ENCODE measurements at regions of chr2 and their contacts with region 1.

Region 1: DNA sequence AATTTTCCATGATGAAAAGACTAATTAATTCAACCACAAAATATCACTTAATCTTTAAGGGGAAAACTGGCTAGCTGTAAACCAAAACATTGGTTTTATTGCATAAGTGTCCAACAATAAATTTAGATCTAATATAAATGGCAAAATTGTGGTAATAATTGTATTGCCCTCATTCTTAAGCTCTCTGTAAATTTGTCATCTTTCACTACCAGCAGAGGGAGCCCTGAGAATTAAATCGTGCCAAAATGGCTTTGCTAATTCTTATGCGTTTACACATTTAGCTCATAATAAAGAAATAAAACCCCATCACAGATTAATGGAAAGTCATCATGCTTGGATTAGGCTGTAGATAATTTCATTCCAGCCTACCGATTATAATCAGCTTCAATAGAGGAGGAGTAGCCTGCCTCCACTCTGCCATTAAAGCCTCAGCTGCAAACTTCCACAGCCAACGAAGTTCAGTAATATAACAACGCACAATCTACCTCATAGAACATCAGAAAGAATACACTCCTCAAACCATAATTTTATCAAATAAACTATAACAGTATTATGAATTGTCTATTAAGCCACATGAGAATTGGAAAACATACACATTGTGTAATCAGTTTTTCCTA is 70.0 kb upstream of the ATP5MC3 start:
- DNase-seq: no peak
- H3K4me3 ChIP-seq: no peak overlapping the region
- H3K27ac ChIP-seq: no peak overlapping the region
- H3K4me1 ChIP-seq: no peaks in the 10 kb centered on the region
- H3K27me3 ChIP-seq: peaks cover 0 to 5% of the 10 kb centered on the region in 2 donors
- CTCF ChIP-seq: peak in 2 of 3 donors; percentile 19 to 23
- POLR2A ChIP-seq: no peak

Region 2: GRCh38 chr2:174180165-174180724 is 1071.3 kb before region 1 on chr2:
- intact Hi-C with region 1: loop called (anchors 10 kb)
- DNase-seq: no peak
- H3K4me3 ChIP-seq: no peak overlapping the region
- H3K27ac ChIP-seq: no peak overlapping the region
- H3K4me1 ChIP-seq: peaks cover 0 to 7% of the 10 kb centered on the region in 2 donors
- H3K27me3 ChIP-seq: no peaks in the 10 kb centered on the region
- CTCF ChIP-seq: no peak
- POLR2A ChIP-seq: no peak

Region 3: DNA sequence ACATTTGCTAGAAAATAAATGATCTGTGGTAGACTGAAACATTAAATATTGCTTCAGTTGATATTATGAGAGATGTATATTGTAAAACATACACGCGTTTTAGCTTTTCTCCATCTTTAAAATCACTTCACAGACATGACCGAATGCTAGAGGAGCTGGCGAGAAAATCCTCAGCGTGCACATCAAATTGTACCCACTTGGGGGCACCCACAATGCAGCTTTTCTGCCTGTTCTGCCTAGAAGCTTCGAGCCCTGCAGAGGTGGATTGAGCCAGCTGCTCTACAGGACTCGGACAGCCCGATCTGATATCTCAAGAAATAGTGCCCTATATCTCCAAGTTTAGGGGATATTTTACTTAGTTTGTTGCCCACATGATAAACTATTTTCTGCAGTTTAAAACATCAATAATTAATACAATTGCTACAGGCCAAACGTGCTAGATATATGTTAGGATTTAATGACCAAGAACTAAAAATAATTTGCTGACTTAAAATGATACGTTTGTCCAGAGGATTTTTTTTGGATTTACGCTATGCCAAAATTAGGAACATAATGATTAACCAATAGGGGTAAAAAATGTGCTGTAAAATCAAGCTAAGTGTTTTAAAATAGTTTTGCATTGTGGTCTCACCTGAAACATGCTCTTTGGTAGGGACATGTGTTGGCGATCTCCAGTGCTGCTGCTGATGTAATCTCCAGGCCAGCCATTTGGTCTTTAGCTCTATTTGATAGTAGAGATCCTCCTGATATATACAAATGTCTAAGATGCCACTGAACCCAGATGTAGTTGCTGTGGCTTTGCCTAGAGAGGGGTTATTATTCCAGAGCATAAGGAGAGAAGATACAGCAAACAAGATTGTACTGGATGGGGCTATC is 47.7 kb before region 1 on chr2:
- intact Hi-C with region 1: no loop called
- DNase-seq: no peak
- H3K4me3 ChIP-seq: no peak overlapping the region
- H3K27ac ChIP-seq: no peak overlapping the region
- H3K4me1 ChIP-seq: no peaks in the 10 kb centered on the region
- H3K27me3 ChIP-seq: peaks cover 0 to 4% of the 10 kb centered on the region in 2 donors
- CTCF ChIP-seq: no peak
- POLR2A ChIP-seq: no peak

Region 4: DNA sequence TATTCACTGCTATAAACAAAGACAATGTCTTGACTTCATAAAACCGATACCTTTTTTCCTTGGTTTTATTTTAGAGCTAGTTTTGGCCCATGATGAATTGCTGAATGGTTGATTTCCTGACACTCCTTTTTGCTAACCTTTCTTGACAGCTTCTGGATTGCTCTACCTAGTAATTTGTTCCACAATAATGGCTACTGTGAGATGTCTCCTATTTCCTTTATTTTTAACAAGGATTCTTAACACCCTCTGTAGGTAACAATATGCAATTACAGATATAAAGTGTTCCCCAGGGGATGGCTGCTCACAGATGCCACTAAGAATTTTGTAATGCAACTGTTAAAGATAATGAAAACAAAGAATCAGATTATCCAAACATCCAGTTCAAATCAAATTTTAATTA is 30.8 kb after region 1 on chr2:
- intact Hi-C with region 1: no loop called
- DNase-seq: no peak
- H3K4me3 ChIP-seq: no peak overlapping the region
- H3K27ac ChIP-seq: no peak overlapping the region
- H3K4me1 ChIP-seq: no peaks in the 10 kb centered on the region
- H3K27me3 ChIP-seq: no peaks in the 10 kb centered on the region
- CTCF ChIP-seq: peak in 1 of 3 donors; percentile 44
- POLR2A ChIP-seq: no peak

Region 5: GRCh38 chr2:175309799-175310198 is 58.3 kb after region 1 on chr2:
- intact Hi-C with region 1: no loop called
- DNase-seq: no peak
- H3K4me3 ChIP-seq: no peak overlapping the region
- H3K27ac ChIP-seq: no peak overlapping the region
- H3K4me1 ChIP-seq: no peaks in the 10 kb centered on the region
- H3K27me3 ChIP-seq: peaks cover 0 to 2% of the 10 kb centered on the region in 2 donors
- CTCF ChIP-seq: no peak
- POLR2A ChIP-seq: no peak

Measured in breast epithelium (tissue), 4 donors.